AG04449 (cell line): ENCODE measurements at regions of chr5 and their contacts with region 1.

Region 1: GRCh38 chr5:142145106-142145900 is 36.7 kb downstream of the NDFIP1 start:
- DNase-seq: no peak
- H3K4me3 ChIP-seq: no peak overlapping the region
- CTCF ChIP-seq: peak; percentile 72

Region 2: GRCh38 chr5:141992349-141992963 is 152.8 kb before region 1 on chr5:
- CTCF ChIA-PET with region 1: interaction called, 226 read pairs
- POLR2A ChIA-PET with region 1: no interaction called
- DNase-seq: no peak
- H3K4me3 ChIP-seq: no peak overlapping the region
- CTCF ChIP-seq: peak; percentile 67

Region 3: GRCh38 chr5:142000703-142001484 is 144.4 kb before region 1 on chr5:
- CTCF ChIA-PET with region 1: interaction called, 226 read pairs
- POLR2A ChIA-PET with region 1: no interaction called
- DNase-seq: no peak
- H3K4me3 ChIP-seq: no peak overlapping the region
- CTCF ChIP-seq: peak; percentile 9

Region 4: GRCh38 chr5:142012792-142013388 is 132.4 kb before region 1 on chr5 and contains the start of gene GNPDA1:
- CTCF ChIA-PET with region 1: interaction called, 128 read pairs
- POLR2A ChIA-PET with region 1: interaction called, 3 read pairs
- DNase-seq: no peak
- H3K4me3 ChIP-seq: peak within 1 kb of the TSS; percentile 77
- CTCF ChIP-seq: no peak

Region 5: DNA sequence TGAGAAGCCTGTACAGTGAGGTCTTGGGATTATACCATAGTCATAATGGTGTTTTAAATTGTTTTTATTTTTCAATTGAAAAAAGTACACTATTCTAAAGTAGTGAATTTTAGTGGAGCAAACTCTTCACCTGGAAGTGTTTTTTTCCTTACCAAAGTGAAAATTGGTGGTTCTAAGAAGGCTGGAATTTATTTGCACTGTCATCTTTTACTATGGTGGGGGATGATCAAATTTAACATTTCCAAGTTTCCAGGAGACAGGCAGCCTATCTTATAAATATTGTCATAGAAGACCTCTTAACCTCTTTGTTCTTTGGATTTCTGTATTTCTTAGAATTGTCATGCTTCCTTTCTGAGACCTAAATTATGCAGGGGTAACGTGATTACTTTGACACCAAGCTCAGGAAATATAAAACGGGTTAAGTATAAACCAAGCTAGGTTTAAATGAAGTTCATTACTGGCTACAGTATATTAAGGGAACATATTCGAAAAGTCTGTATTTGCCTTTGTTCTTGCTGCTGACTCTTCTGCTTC is 16.6 kb before region 1 on chr5:
- CTCF ChIA-PET with region 1: interaction called, 37 read pairs
- POLR2A ChIA-PET with region 1: no interaction called
- DNase-seq: no peak
- H3K4me3 ChIP-seq: no peak overlapping the region
- CTCF ChIP-seq: no peak

Region 6: GRCh38 chr5:142134331-142135010 is 10.8 kb before region 1 on chr5:
- CTCF ChIA-PET with region 1: interaction called, 37 read pairs
- POLR2A ChIA-PET with region 1: no interaction called
- DNase-seq: no peak
- H3K4me3 ChIP-seq: no peak overlapping the region
- CTCF ChIP-seq: no peak

Region 7: DNA sequence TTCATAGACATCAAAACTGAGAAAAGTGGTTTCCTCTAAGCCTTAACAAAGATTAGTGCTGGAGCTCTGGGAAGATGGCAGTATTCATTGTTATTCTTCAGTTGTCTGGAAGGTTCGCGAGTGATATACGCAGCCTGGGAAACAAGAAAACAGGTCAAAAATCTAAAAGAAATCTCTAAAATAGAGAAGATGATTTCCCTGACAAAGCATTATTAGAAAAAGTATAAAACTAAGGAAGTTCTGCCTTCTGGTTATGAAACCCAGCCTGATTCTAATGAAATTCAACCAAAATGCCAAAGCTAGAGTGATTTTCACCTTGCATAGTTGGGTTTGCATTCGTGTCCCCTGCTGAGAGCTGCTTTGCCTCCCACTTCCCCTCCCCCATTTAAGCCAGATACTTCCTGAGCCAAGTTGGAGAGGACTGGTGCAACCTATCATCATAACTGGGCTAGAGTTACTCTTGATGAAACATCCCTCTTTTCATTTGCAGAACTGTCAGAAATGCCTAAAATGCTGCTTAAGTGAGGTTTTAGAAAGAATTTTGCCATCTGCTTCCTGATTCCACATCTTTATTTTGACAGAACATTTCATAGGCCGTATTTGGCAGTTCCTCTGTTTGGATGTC is 11.6 kb after region 1 on chr5:
- CTCF ChIA-PET with region 1: interaction called, 11 read pairs
- POLR2A ChIA-PET with region 1: no interaction called
- DNase-seq: no peak
- H3K4me3 ChIP-seq: no peak overlapping the region
- CTCF ChIP-seq: no peak